ENCODE measurements at regions of chr14 and their contacts with region 1.

Region 1: GRCh38 chr14:24284491-24285035 is 13.2 kb upstream of the RABGGTA start:
- DNase-seq: no peak
- ATAC-seq: no peak
- H3K4me3 ChIP-seq: no peak overlapping the region
- H3K27ac ChIP-seq: no peak overlapping the region
- H3K4me1 ChIP-seq: peaks cover 11% of the 10 kb centered on the region
- H3K27me3 ChIP-seq: no peaks in the 10 kb centered on the region
- CTCF ChIP-seq: no peak
- EP300 ChIP-seq: no peak
- POLR2A ChIP-seq: no peak
- RAD21 ChIP-seq: no peak

Region 2: GRCh38 chr14:24098927-24099813 is 185.4 kb before region 1 on chr14:
- CTCF ChIA-PET with region 1: no interaction called
- POLR2A ChIA-PET with region 1: no interaction called
- RAD21 ChIA-PET with region 1: no interaction called
- SMC1A ChIA-PET with region 1: no interaction called
- in situ Hi-C with region 1: no loop called
- intact Hi-C with region 1: no loop called
- DNase-seq: no peak
- ATAC-seq: no peak
- H3K4me3 ChIP-seq: no peak overlapping the region
- H3K27ac ChIP-seq: no peak overlapping the region
- H3K4me1 ChIP-seq: no peaks in the 10 kb centered on the region
- H3K27me3 ChIP-seq: no peaks in the 10 kb centered on the region
- CTCF ChIP-seq: no peak
- EP300 ChIP-seq: no peak
- POLR2A ChIP-seq: no peak
- RAD21 ChIP-seq: no peak

Region 3: GRCh38 chr14:24271134-24271833 is 13.3 kb before region 1 on chr14 and contains the start of gene RABGGTA:
- CTCF ChIA-PET with region 1: interaction called, 269 read pairs
- POLR2A ChIA-PET with region 1: interaction called, 12 read pairs
- RAD21 ChIA-PET with region 1: interaction called, 14 read pairs
- SMC1A ChIA-PET with region 1: interaction called, 8 read pairs
- in situ Hi-C with region 1: no loop called
- intact Hi-C with region 1: no loop called
- DNase-seq: peak; percentile 80
- ATAC-seq: peak; percentile 89
- H3K4me3 ChIP-seq: peak within 1 kb of the TSS; percentile 88
- H3K27ac ChIP-seq: peak within 1 kb of the TSS; percentile 99
- H3K4me1 ChIP-seq: peaks cover 25% of the 10 kb centered on the region
- H3K27me3 ChIP-seq: no peaks in the 10 kb centered on the region
- CTCF ChIP-seq: peak; percentile 84 to 93 (median 86); a peak in 5 of 6 replicates
- EP300 ChIP-seq: no peak
- POLR2A ChIP-seq: peak; percentile 93
- RAD21 ChIP-seq: 0 out of 2 replicates have a peak, but pooled peaks have one; percentile 25
- polyA plus RNA-seq, gene RABGGTA: 38.2 to 38.6 TPM